ENCODE measurements at regions of chr16 and their contacts with region 1.

Region 1: DNA sequence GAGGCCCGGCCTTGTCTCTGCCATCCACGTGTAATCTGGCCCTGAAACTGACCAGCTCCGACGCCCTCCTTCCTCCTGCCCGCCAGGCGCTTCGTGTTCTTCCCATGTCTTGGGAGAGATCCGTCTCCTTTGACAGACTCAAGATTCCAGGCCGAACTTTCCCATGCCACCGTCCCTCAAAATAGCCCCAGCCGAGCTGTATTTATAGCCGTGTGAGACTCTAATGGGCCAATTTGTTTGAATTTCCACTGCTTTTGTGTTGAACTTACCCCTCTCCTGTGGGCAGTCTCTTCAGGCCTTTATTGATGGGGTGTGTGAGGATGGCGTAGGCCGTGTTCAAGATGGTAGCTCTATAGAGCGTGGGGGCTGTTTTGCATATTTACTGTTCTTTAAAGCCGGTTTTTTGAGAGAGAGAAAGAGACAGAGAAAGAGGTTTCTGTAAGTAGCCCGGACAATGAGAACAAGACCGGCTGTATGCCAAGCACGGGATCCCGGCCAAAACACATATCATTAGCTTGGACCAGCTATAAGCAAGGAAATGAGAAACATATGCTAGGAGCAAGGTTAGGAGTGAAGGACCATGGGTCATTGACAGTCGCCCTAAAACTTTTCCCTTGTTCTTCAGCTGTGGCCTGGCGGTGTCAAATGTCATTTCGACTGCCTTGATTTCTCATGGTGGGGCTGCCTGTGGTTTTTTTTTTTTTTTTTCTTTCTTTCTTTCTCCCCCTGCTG is 124.5 kb upstream of the ZFHX3 start:
- DNase-seq: peak; percentile 53 to 86 (median 76)
- H3K4me3 ChIP-seq: no peak overlapping the region
- H3K27ac ChIP-seq: peak overlapping the region in 3 of 5 donors; percentile 21 to 80 (median 76)
- H3K4me1 ChIP-seq: peaks cover 8 to 13% of the 10 kb centered on the region in 2 donors
- H3K27me3 ChIP-seq: no peaks in the 10 kb centered on the region
- CTCF ChIP-seq: peak in 4 of 6 experiments; percentile 13 to 86 (median 50)
- POLR2A ChIP-seq: no peak

Region 2: DNA sequence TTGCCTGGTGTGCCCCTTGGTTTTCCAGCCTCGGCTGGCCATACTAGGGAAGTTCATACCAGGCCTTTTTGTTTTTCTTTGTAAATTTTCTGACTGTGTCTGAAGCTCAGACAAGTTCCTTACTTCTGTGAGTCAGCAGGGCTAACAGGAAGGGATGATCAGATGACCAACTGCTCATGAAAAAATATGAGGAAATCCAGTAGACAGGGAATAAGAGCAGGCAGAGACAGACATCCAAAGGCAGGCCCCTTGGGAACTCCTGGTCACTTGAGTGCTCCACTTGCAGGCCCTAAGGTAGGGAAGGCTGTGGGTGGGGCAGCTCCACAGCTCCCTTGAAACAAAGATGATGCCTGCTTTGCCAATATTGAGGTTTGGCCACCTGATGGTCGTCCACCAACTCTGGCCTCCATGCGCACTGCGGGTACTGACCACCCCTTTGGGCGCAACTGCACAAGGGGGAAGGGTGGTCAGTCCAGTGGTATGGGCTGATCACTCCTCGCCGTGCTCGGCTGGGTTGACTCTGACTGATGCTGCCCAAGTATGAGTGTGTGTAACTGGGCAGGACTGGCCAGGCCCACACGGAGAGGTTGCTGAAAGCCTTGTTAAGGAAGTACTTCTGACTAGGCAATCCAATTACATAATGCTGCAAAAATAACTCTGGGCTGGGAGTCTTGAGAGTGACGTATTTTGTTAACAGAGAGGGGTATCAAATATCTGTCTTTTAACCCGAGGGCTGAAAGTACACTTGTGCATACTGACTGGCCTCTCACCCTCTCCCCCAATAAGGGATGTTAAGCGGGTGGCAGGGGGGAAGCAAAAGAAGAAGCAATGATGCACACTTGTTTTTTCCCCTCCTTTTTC is 103.6 kb before region 1 on chr16:
- intact Hi-C with region 1: loop called (anchors 10 kb)
- DNase-seq: peak in 6 of 7 donors; percentile 52 to 77 (median 60)
- H3K4me3 ChIP-seq: no peak overlapping the region
- H3K27ac ChIP-seq: peak overlapping the region; percentile 55 to 97 (median 79)
- H3K4me1 ChIP-seq: peaks cover 31 to 57% of the 10 kb centered on the region in 2 donors
- H3K27me3 ChIP-seq: no peaks in the 10 kb centered on the region
- CTCF ChIP-seq: peak in 1 of 6 experiments; percentile 18
- POLR2A ChIP-seq: peak in 1 of 2 donors; percentile 57

Region 3: DNA sequence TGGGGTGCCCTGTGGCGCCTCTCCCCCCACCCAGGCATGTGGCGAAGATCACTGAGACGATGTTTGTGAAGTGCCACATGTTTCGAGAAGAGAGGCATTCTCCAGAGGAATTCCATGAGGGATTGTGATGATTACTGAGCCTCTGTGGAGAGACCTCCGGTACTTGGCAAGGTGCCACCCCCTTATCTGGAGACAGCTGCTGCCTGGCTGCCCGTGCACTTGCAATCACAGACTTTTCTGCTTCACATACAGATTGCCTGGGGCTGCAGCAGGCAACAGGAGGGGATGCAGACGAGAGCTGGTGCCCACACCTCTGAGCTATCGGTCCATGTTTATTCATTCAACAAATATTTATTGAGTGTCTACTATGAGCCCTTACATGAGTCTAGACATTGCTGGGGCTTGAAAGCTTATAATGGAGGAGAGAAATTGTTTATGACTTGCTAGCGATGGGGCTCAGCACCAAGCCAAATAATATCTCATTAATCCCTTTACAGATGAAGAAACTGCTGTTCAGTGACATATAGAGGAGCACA is 192.7 kb after region 1 on chr16:
- intact Hi-C with region 1: no loop called
- DNase-seq: peak; percentile 52 to 83 (median 78)
- H3K4me3 ChIP-seq: no peak overlapping the region
- H3K27ac ChIP-seq: no peak overlapping the region
- H3K4me1 ChIP-seq: peaks cover 5 to 7% of the 10 kb centered on the region in 2 donors
- H3K27me3 ChIP-seq: no peaks in the 10 kb centered on the region
- CTCF ChIP-seq: no peak
- POLR2A ChIP-seq: no peak

Measured in adrenal gland (tissue), 19 donors.